ENCODE measurements at regions of chr17 and their contacts with region 1.

Region 1: DNA sequence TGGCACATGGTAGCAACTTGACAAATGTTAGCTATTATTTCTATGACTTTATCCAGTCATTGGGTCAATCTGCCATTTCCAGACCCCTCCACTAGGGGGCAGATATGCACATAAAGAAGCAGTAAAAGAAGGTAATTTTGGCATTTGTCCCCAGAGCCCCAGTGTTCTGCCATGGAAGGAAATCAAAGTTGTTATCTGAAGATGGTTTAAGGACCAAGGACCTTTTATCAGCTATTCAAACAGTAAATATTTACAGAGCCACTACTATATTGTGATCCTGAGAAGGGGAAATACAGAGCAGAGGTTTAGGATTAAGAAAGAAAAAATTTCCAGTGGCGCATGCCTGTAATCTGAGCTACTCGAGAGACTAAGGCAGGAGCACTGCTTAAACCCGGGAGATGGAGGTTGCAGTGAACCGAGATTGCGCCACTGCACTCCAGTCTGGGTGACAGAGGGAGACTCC is 20.0 kb downstream of the TRAF4 start:
- DNase-seq: peak; percentile 63 to 86
- ATAC-seq: peak; percentile 73 to 90 (median 82)
- H3K4me3 ChIP-seq: no peak overlapping the region
- H3K4me3 Mint-ChIP-seq: no peak overlapping the region
- H3K27ac ChIP-seq: no peak overlapping the region
- H3K27ac Mint-ChIP-seq: peak overlapping the region; percentile 57 to 68
- H3K4me1 ChIP-seq: no peaks in the 10 kb centered on the region
- H3K4me1 Mint-ChIP-seq: peaks cover 5% of the 10 kb centered on the region in 2 donors
- H3K27me3 ChIP-seq: no peaks in the 10 kb centered on the region
- H3K27me3 Mint-ChIP-seq: no peaks in the 10 kb centered on the region
- CTCF ChIP-seq: peak; percentile 86

Region 2: DNA sequence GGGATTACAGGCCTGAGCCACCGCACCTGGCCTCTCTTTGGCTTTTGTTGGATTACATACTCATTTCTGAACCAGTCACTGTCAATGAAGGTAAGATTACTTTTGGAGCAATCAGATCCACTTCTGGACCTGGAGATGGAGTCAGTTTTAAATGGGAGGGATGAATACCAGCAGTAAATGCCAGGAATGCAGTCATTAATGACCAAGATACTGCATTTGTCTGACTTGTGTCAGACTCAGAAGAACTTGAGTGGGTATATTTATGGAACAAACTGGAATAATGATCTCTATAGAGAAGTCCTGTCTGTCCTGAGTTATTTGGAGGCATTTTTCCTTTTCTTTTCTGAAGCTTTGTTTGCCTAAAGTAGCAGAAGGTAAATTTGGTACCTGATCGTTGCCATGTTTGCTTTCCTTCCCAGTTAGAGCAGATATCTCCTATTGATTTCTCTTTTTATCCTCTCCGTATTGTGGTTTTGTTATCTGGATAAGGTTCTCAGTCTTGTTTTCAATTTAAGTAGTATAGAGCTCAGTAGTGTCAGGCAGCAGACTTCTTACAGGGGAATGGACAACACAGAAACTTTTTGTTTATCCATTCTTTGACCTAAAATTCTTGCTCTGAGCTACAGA is 710.7 kb before region 1 on chr17:
- intact Hi-C with region 1: no loop called
- DNase-seq: no peak
- ATAC-seq: no peak
- H3K4me3 ChIP-seq: no peak overlapping the region
- H3K4me3 Mint-ChIP-seq: no peak overlapping the region
- H3K27ac ChIP-seq: no peak overlapping the region
- H3K27ac Mint-ChIP-seq: no peak overlapping the region
- H3K4me1 ChIP-seq: no peaks in the 10 kb centered on the region
- H3K4me1 Mint-ChIP-seq: peaks cover 43 to 46% of the 10 kb centered on the region in 2 donors
- H3K27me3 ChIP-seq: no peaks in the 10 kb centered on the region
- H3K27me3 Mint-ChIP-seq: no peaks in the 10 kb centered on the region
- CTCF ChIP-seq: no peak

Region 3: DNA sequence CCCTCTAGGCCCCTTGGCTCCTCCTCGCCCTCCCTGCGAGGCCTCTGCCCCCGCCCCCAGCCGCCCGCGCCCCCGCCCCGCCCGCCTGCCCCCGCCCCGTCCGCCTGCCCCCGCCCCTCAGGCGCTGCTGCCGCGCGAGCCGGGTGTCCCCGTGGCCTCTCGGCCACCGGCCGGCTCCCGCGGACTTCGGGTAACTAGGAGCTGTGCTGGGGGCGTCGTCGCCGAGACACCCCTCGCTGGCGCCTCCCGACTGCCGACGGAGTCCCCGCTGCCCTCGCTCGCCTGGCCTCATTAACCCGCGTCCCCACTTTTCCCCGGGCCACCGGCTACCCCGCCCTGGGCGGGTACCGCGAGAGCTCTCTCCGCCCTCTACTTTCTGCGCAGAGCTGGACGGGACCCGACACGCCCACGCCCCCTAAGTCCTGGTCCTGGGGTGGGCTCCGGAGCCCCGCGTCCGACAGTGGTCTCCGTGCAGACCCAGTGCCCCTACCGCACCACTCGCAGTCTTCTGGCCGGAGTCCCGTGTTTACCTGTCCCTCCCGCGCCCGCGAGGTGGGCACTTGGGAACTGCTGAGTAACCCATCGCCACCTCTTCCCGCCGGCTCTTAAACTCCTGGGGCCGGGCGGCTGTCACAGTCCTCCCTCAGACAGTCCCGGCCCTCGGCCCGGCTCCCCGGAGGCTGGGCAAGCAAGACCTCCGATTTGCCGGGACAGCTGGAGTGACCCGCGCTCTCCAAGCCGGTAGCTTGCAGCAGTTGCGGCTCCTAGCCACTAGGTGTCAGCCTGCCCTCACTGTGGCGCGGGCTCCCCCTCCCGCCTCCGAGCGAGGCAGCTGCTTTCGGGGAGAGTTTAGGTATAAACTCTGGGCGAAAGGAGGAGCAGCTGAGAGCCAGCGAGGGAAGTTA is 37.4 kb before region 1 on chr17 and contains the start of gene TLCD1:
- intact Hi-C with region 1: loop called (anchors 5 kb)
- DNase-seq: peak; percentile 88 to 94
- ATAC-seq: peak; percentile 58 to 79 (median 59)
- H3K4me3 ChIP-seq: peak within 1 kb of the TSS; percentile 71
- H3K4me3 Mint-ChIP-seq: peak within 1 kb of the TSS; percentile 96
- H3K27ac ChIP-seq: peak within 1 kb of the TSS; percentile 99
- H3K27ac Mint-ChIP-seq: peak within 1 kb of the TSS; percentile 96
- H3K4me1 ChIP-seq: peaks cover 54% of the 10 kb centered on the region
- H3K4me1 Mint-ChIP-seq: peaks cover 38 to 41% of the 10 kb centered on the region in 2 donors
- H3K27me3 ChIP-seq: no peaks in the 10 kb centered on the region
- H3K27me3 Mint-ChIP-seq: no peaks in the 10 kb centered on the region
- CTCF ChIP-seq: peak; percentile 99
- total RNA-seq, gene TLCD1: 1.0 TPM in 1 of 3 donors, not detected in the others

Region 4: GRCh38 chr17:28750178-28751047 is 13.4 kb before region 1 on chr17:
- intact Hi-C with region 1: no loop called
- DNase-seq: peak; percentile 85 to 95
- ATAC-seq: peak; percentile 95 to 97 (median 96)
- H3K4me3 ChIP-seq: no peak overlapping the region
- H3K4me3 Mint-ChIP-seq: no peak overlapping the region
- H3K27ac ChIP-seq: no peak overlapping the region
- H3K27ac Mint-ChIP-seq: no peak overlapping the region
- H3K4me1 ChIP-seq: peaks cover 24% of the 10 kb centered on the region
- H3K4me1 Mint-ChIP-seq: peaks cover 5 to 9% of the 10 kb centered on the region in 2 donors
- H3K27me3 ChIP-seq: no peaks in the 10 kb centered on the region
- H3K27me3 Mint-ChIP-seq: no peaks in the 10 kb centered on the region
- CTCF ChIP-seq: peak; percentile 100

Region 5: DNA sequence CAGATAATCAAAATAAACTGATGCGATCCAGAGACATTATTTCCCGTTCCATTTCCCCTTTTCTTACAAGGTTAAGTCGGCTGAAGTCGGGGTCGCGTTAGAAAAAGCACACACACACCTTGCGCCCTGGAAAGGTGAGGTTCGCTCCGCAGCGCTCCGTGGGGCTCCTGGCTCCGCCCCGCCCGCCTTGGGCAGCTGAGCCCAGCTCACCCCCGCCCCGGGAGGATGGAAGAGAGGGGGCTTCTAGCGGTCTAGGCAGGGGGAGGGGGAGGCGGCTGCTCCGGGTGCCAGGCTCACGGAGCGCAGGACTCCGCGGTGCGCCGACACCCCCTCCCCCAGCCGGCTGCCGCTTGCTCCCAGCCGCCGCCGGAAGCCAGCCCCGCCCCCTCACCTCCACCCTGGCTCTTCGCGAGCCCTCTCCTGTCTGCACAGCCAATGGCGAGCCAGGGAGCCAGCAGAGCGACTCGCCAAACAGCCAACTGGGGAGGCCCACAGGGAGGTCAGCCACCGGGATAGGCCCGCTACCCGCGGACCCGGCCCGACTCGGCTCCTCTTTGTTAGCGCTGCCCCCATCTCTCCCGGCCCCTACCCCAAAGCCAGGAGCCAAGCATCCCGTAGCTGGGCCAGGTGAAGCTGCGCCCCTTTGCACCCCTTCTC is 48.4 kb after region 1 on chr17:
- intact Hi-C with region 1: loop called (anchors 10 kb)
- DNase-seq: peak; percentile 94 to 97
- ATAC-seq: peak; percentile 99 to 100 (median 99)
- H3K4me3 ChIP-seq: peak overlapping the region; percentile 90
- H3K4me3 Mint-ChIP-seq: peak overlapping the region; percentile 95
- H3K27ac ChIP-seq: peak overlapping the region; percentile 82
- H3K27ac Mint-ChIP-seq: peak overlapping the region; percentile 86 to 91
- H3K4me1 ChIP-seq: no peaks in the 10 kb centered on the region
- H3K4me1 Mint-ChIP-seq: peaks cover 19 to 31% of the 10 kb centered on the region in 2 donors
- H3K27me3 ChIP-seq: no peaks in the 10 kb centered on the region
- H3K27me3 Mint-ChIP-seq: no peaks in the 10 kb centered on the region
- CTCF ChIP-seq: no peak

Region 6: DNA sequence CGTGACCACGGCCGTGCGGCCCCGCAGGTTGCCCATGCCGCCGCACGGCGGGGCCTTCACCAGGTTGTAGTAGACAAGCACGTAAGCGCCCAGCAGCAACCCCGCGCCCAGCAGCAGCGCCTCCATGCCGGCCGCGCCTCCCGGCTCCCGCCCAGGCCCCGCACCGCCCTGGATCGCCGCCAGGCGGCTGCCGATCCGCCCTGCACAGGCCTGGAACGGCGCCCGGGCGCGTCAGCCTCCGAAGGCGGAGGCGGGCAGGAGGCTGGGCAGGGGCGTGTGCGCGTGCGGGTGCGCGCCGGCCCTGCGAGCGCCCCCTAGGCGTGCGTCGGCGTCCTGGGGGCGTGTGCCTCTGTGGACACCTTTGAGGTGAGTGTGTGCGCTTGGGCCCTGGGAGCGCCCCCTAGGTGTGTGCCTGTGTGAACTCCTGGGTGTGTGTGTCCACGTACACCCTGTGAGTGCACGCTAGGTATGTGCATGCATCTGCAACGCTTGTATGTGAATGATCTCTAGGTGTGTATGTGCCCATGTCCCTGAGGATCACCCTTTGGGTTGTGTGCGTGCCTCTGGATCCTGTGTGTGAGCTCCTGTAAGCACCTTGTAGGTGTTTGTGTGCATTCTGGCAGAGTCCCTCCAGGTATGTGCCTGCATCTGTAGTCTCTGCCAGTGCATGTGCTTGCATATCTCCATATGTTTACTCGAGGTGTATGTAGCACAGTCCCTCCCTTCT is 139.1 kb after region 1 on chr17 and contains the start of gene DHRS13:
- intact Hi-C with region 1: loop called (anchors 5 kb)
- DNase-seq: peak; percentile 92 to 98
- ATAC-seq: peak; percentile 92 to 99 (median 95)
- H3K4me3 ChIP-seq: peak within 1 kb of the TSS; percentile 69
- H3K4me3 Mint-ChIP-seq: peak within 1 kb of the TSS; percentile 83
- H3K27ac ChIP-seq: peak within 1 kb of the TSS; percentile 48
- H3K27ac Mint-ChIP-seq: peak within 1 kb of the TSS; percentile 69 to 84
- H3K4me1 ChIP-seq: peaks cover 30% of the 10 kb centered on the region
- H3K4me1 Mint-ChIP-seq: peaks cover 19 to 47% of the 10 kb centered on the region in 2 donors
- H3K27me3 ChIP-seq: no peaks in the 10 kb centered on the region
- H3K27me3 Mint-ChIP-seq: no peaks in the 10 kb centered on the region
- CTCF ChIP-seq: peak; percentile 99
- total RNA-seq, gene DHRS13: 22.5 to 27.3 (median 23.2) TPM

Region 7: GRCh38 chr17:28916302-28916934 is 152.6 kb after region 1 on chr17:
- intact Hi-C with region 1: loop called (anchors 1 kb)
- DNase-seq: peak in 1 of 2 donors; percentile 69
- ATAC-seq: peak; percentile 75 to 82 (median 81)
- H3K4me3 ChIP-seq: no peak overlapping the region
- H3K4me3 Mint-ChIP-seq: no peak overlapping the region
- H3K27ac ChIP-seq: no peak overlapping the region
- H3K27ac Mint-ChIP-seq: peak overlapping the region; percentile 59 to 78
- H3K4me1 ChIP-seq: no peaks in the 10 kb centered on the region
- H3K4me1 Mint-ChIP-seq: peaks cover 3 to 6% of the 10 kb centered on the region in 2 donors
- H3K27me3 ChIP-seq: no peaks in the 10 kb centered on the region
- H3K27me3 Mint-ChIP-seq: no peaks in the 10 kb centered on the region
- CTCF ChIP-seq: peak; percentile 76

Region 8: DNA sequence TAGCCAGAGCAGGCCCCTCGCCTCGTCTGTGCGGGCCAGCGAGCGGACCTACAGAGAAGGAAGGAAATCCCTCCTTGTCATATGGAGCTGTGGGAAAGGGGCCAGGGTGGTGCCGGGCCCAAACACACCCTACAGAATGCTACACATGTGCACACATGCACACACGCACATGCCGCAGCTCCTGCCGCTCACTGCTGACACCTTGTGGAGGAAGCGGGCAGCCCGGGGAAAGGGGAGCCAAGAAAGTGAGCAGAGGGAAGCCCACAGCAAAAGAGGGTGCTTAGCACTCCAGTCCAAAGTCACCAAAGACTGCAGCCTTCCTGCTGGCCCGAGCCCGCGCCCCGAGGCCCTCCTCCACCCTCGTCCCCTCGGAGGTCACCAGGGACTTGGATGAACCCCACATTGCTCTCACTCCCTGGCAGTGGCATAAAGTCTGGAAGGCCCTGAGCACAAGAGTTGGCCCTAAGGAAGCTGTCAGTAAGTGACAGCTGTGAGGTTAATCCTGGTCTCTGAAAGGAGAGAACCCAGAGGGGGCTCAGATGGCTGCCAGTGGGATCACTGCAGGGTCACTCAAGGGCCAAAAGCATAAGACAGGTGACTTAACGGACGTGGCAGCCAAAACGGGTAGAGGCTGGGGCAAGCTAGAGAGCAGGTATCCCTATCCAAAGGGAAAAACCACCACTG is 348.1 kb after region 1 on chr17:
- intact Hi-C with region 1: loop called (anchors 10 kb)
- DNase-seq: peak; percentile 51 to 77
- ATAC-seq: peak; percentile 61 to 74 (median 70)
- H3K4me3 ChIP-seq: no peak overlapping the region
- H3K4me3 Mint-ChIP-seq: no peak overlapping the region
- H3K27ac ChIP-seq: no peak overlapping the region
- H3K27ac Mint-ChIP-seq: no peak overlapping the region
- H3K4me1 ChIP-seq: peaks cover 6% of the 10 kb centered on the region
- H3K4me1 Mint-ChIP-seq: peaks cover 7 to 16% of the 10 kb centered on the region in 2 donors
- H3K27me3 ChIP-seq: no peaks in the 10 kb centered on the region
- H3K27me3 Mint-ChIP-seq: no peaks in the 10 kb centered on the region
- CTCF ChIP-seq: peak; percentile 67

Region 9: DNA sequence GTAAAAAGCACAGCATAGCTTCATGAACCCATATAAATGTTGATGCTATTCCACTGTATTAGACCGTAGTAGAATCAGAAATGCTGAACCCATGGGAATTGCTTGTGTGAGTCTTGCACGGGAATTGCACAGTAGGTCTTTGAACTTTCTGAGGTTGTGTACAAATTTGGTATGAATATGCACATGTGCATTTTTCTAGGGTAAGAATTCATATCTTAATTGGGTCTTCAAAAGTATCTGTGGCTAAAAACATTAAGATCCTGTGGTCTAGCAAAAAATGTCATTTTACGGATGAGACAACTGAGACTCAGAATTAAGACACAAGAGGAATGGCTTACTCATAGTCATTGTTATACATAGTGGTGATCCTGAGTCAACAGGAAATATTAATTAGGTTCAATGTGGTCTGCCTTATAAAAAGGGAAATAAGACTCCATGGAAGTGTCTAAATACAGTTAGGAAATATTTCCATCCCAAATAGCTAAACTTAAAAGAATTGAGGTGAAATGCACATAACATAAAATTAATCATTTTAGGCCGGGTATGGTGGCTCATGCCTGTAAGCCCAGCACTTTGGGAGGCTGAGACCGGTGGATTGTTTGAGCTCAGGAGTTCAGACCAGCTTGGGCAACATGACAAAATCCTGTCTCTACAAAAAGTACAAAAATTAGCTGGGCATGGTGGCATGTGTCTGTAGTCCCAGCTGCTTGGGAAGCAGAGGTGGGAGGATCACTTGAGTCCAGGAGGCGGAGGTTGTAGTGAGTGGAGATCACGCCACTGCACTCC is 649.1 kb after region 1 on chr17:
- intact Hi-C with region 1: no loop called
- DNase-seq: no peak
- ATAC-seq: no peak
- H3K4me3 ChIP-seq: no peak overlapping the region
- H3K4me3 Mint-ChIP-seq: no peak overlapping the region
- H3K27ac ChIP-seq: no peak overlapping the region
- H3K27ac Mint-ChIP-seq: peak overlapping the region; percentile 24 to 35
- H3K4me1 ChIP-seq: no peaks in the 10 kb centered on the region
- H3K4me1 Mint-ChIP-seq: peaks cover 28 to 41% of the 10 kb centered on the region in 2 donors
- H3K27me3 ChIP-seq: no peaks in the 10 kb centered on the region
- H3K27me3 Mint-ChIP-seq: no peaks in the 10 kb centered on the region
- CTCF ChIP-seq: no peak

Measured in natural killer cell (primary cell).